Endothelial cell of umbilical vein (primary cell): ENCODE measurements at regions of chr2 and their contacts with region 1.

Region 1: DNA sequence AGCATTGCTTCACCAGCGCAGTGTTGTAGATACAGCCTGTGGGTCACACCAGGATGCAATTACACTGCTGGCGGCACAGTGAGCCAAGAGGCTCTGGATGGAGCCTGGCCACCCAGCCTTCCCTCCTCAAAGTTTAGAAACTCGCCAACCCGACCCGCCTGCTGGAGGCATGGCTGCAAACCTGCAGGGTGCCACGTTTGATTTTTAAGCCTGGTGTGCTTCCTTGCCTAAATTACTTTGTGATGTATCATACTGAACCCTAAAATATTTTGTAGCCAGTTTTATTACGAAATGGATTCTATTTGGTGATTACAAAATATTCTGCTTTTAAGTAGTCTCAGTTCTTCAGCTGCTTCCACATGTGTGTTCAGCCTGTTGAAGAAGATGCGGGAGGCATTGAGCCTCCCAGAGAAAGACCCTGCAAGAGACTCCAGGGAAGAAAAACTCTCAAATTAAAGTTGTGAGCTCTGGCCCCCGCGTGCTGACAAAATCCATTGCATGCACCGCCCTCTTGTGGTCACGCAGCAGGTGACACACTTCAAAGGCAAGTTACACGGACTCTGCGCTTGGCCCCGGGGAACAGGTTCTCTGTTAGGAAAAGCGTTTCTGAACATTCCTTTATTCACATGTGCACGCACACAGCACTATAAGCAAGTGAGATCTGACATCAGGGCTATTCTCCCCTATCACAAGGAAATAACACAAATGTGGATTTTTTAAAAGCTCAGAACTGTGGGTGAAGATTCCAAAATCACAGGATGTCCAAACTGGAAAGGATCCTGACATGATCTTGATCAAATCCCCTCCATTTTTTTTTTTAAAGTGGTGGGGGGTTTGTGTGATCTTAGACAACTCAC is 63.0 kb upstream of the TWIST2 start:
- DNase-seq: peak; percentile 51
- H3K4me3 ChIP-seq: no peak overlapping the region
- H3K27ac ChIP-seq: no peak overlapping the region
- H3K4me1 ChIP-seq: no peaks in the 10 kb centered on the region
- H3K27me3 ChIP-seq: no peaks in the 10 kb centered on the region
- CTCF ChIP-seq: peak; percentile 85 to 88
- POLR2A ChIP-seq: no peak

Region 2: DNA sequence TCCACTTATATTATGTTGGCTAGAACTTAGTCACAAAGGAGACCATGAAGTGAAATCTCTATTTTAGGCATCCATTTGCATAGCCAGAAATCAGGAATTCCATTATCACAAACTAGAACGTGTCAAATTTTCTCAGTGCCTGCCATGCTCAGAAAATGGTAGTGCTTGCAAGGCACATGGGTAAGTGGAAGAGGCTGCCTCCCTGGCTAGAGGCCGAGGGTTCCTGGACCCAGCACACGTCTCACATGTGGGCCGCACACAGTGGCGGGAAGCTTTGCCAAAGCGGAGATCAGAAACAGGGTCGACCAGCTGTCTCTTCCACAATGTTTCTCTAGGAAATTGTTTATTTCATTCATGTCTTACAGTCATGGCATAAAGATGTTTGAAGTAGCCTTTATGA is 422.3 kb before region 1 on chr2:
- CTCF ChIA-PET with region 1: interaction called, 18 read pairs
- POLR2A ChIA-PET with region 1: no interaction called
- dilution Hi-C with region 1: no loop called
- intact Hi-C with region 1: loop called (anchors 1 kb)
- DNase-seq: no peak
- H3K4me3 ChIP-seq: no peak overlapping the region
- H3K27ac ChIP-seq: no peak overlapping the region
- H3K4me1 ChIP-seq: no peaks in the 10 kb centered on the region
- H3K27me3 ChIP-seq: no peaks in the 10 kb centered on the region
- CTCF ChIP-seq: no peak
- POLR2A ChIP-seq: no peak

Region 3: DNA sequence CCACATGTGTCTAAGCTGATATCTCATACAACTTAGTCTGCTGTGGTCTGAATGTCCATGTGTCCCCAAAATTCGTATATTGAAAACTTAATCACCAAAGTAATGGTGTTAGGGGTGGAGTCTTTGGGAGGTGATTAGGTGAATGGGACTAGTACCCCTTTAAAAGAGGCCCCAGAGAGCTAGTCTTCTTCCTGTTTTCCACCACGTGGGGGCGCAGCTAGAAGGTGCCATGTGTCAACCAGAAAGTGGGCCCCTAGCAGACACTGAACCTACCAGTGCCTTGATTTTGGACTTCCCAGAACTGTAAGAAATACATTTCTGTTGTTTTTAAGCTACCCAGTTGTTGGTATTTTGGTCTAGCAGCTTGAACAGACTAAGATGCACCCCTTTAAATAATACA is 271.6 kb before region 1 on chr2:
- CTCF ChIA-PET with region 1: interaction called, 223 read pairs
- POLR2A ChIA-PET with region 1: no interaction called
- dilution Hi-C with region 1: no loop called
- intact Hi-C with region 1: loop called (anchors 1 kb)
- DNase-seq: peak; percentile 36
- H3K4me3 ChIP-seq: no peak overlapping the region
- H3K27ac ChIP-seq: no peak overlapping the region
- H3K4me1 ChIP-seq: no peaks in the 10 kb centered on the region
- H3K27me3 ChIP-seq: no peaks in the 10 kb centered on the region
- CTCF ChIP-seq: peak; percentile 59 to 64
- POLR2A ChIP-seq: no peak

Region 4: DNA sequence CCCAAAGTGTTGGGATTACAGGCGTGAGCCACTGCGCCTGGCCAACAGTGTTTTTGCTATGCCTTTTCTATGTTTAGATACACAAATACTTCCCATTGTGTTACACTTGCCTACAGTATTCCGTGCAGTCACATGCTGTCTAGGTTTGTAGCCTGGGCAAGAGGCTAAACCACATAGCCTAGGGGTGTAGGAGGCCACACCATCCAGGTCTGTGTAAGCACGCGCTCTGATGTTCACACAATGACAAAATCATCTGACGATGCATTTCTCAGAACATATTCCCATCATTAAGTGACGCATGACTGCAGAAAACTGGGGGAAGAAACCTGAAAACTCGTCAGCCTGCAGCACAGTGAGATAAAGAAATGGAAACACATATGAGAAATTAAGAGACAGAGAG is 16.9 kb after region 1 on chr2:
- CTCF ChIA-PET with region 1: interaction called, 15 read pairs
- POLR2A ChIA-PET with region 1: no interaction called
- dilution Hi-C with region 1: no loop called
- intact Hi-C with region 1: no loop called
- DNase-seq: no peak
- H3K4me3 ChIP-seq: no peak overlapping the region
- H3K27ac ChIP-seq: no peak overlapping the region
- H3K4me1 ChIP-seq: no peaks in the 10 kb centered on the region
- H3K27me3 ChIP-seq: no peaks in the 10 kb centered on the region
- CTCF ChIP-seq: no peak
- POLR2A ChIP-seq: no peak

Region 5: DNA sequence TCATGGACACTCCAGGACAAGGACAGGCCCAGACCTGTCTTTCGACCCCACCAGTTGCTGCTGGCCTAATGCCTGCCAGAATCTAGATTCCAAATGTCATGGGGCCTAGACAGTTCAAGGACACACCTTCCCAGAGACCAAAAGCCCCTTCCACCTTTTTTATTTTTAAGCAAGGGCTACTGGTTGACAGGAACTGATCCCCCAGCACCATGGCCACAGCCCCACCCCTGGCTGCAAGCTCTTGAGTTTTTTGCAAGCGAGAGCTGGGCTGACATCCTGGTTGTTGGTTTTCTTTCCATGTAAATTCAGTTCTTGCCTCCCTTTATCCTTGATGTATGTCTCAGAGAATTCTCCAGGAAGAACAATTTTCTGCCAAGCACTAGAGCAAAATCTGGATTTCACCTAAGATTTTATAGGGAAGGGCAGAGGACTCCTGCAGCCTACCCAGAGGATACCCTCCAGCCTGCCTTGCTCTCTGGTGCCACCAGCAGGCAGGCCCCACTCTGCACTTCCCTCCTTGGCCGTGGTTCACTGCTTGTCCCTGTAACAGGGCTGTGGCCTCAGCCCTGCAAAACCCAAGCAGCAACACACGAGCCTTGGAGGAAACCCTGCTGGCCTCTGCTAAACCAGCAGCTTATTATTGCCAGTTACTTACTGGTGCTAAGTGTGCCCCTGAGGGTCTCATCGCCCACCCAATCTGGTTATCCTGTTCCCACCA is 160.7 kb after region 1 on chr2:
- CTCF ChIA-PET with region 1: interaction called, 21 read pairs
- POLR2A ChIA-PET with region 1: no interaction called
- dilution Hi-C with region 1: no loop called
- intact Hi-C with region 1: loop called (anchors 2 kb)
- DNase-seq: peak; percentile 65
- H3K4me3 ChIP-seq: no peak overlapping the region
- H3K27ac ChIP-seq: no peak overlapping the region
- H3K4me1 ChIP-seq: no peaks in the 10 kb centered on the region
- H3K27me3 ChIP-seq: no peaks in the 10 kb centered on the region
- CTCF ChIP-seq: peak; percentile 62 to 91
- POLR2A ChIP-seq: no peak